Sciatic nerve (tissue), 2 donors: ENCODE measurements at regions of chr1 and their contacts with region 1.

Region 1: DNA sequence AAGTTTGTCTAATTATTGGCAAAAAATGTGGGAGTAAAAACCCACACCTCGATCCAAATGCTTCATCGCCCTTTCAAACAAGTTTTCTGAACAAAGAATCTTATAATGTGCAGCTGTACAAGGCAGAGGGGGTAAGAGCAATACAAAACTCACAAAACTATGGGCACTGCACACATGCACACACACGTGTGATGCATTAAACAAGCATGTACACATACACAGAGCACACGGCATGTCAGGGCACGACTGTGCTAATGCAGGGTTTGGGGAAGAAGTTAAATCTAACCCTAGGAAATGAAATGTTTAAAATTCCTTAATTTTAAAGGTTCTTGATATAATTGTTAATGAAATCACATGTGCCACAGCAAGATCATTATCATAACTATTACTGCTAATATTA is 264.0 kb downstream of the SEC16B start:
- DNase-seq: no peak
- ATAC-seq: no peak

Region 2: DNA sequence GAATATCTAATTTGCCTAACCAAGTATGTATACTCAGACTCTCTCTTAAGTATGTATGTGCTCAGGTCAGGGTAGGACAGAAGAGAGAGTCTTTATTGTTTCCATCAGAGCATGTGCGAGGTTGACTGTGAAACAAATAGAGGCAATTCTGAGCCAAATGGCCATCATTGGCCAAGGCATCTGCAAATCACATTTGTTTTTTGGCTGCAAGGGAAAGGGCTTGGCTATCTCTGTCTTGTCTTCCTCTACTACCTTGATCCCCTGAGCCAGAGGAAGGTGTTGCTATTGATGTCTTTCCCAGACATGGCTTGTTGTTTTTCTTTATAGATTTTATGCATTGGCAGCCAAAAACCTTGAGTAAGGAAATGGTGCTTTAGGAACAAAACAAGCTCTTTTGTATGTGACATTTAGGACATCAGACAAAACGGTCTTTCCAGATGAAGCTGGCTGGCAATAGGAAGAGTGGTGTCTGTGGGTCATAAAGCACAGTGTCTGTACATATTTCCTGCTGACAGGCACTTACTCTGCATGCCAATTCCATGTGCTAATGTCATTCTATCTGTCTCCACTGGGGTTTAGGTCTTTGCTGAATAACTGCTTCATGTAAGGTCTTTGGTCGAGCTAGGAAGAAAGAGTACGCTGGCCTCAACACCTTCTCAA is 371.8 kb before region 1 on chr1:
- intact Hi-C with region 1: no loop called
- DNase-seq: no peak
- ATAC-seq: no peak

Region 3: GRCh38 chr1:177451191-177451590 is 254.6 kb before region 1 on chr1:
- intact Hi-C with region 1: loop called (anchors 5 kb)
- DNase-seq: no peak
- ATAC-seq: no peak